ENCODE measurements at regions of chr22 and their contacts with region 1.

Region 1: GRCh38 chr22:46798366-46799350 is 36.2 kb downstream of the TBC1D22A start:
- DNase-seq: peak; percentile 55 to 83 (median 71)
- ATAC-seq: peak; percentile 87
- H3K4me3 ChIP-seq: no peak overlapping the region
- H3K4me3 Mint-ChIP-seq: no peak overlapping the region
- H3K27ac ChIP-seq: no peak overlapping the region
- H3K27ac Mint-ChIP-seq: peak overlapping the region; percentile 87
- H3K4me1 ChIP-seq: peaks cover 7% of the 10 kb centered on the region
- H3K4me1 Mint-ChIP-seq: peaks cover 26% of the 10 kb centered on the region
- H3K27me3 ChIP-seq: no peaks in the 10 kb centered on the region
- H3K27me3 Mint-ChIP-seq: no peaks in the 10 kb centered on the region
- CTCF ChIP-seq: peak; percentile 72

Region 2: GRCh38 chr22:46563381-46564083 is 235.1 kb before region 1 on chr22:
- CTCF ChIA-PET with region 1: interaction called, 39 read pairs
- POLR2A ChIA-PET with region 1: no interaction called
- intact Hi-C with region 1: loop called in 1 of 2 experiments (anchors 1 kb)
- DNase-seq: peak; percentile 63 to 86 (median 76)
- ATAC-seq: peak; percentile 95
- H3K4me3 ChIP-seq: no peak overlapping the region
- H3K4me3 Mint-ChIP-seq: no peak overlapping the region
- H3K27ac ChIP-seq: no peak overlapping the region
- H3K27ac Mint-ChIP-seq: no peak overlapping the region
- H3K4me1 ChIP-seq: peaks cover 5% of the 10 kb centered on the region
- H3K4me1 Mint-ChIP-seq: peaks cover 2% of the 10 kb centered on the region
- H3K27me3 ChIP-seq: no peaks in the 10 kb centered on the region
- H3K27me3 Mint-ChIP-seq: no peaks in the 10 kb centered on the region
- CTCF ChIP-seq: peak; percentile 68

Region 3: DNA sequence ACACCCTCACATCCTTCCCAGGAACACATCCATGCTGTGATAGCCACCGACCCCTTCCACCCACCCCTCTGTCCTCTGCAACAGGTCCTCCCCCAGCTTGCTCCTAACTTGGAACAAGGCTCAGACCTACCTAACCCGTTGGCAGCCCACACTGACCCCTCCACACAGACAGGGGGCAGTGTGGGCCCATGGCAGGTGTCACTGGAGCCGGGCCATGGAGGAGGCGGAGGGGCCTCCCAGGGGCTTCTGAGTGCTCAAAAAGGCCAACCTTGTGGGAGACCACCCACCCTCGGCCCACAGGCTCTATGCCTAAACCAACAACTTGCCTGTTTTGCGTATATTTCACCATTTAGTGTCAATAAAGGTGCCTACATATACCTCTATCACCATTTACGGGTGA is 117.6 kb before region 1 on chr22:
- CTCF ChIA-PET with region 1: interaction called, 12 read pairs
- POLR2A ChIA-PET with region 1: no interaction called
- intact Hi-C with region 1: no loop called
- DNase-seq: peak in 3 of 9 experiments; percentile 21 to 44 (median 43)
- ATAC-seq: peak; percentile 54
- H3K4me3 ChIP-seq: no peak overlapping the region
- H3K4me3 Mint-ChIP-seq: no peak overlapping the region
- H3K27ac ChIP-seq: no peak overlapping the region
- H3K27ac Mint-ChIP-seq: peak overlapping the region; percentile 27
- H3K4me1 ChIP-seq: peaks cover 18% of the 10 kb centered on the region
- H3K4me1 Mint-ChIP-seq: peaks cover 23% of the 10 kb centered on the region
- H3K27me3 ChIP-seq: no peaks in the 10 kb centered on the region
- H3K27me3 Mint-ChIP-seq: no peaks in the 10 kb centered on the region
- CTCF ChIP-seq: peak; percentile 24

Region 4: GRCh38 chr22:46737976-46738646 is 60.5 kb before region 1 on chr22 and contains the start of gene CERK:
- CTCF ChIA-PET with region 1: interaction called, 35 read pairs
- POLR2A ChIA-PET with region 1: interaction called, 3 read pairs
- intact Hi-C with region 1: loop called in 1 of 2 experiments (anchors 1 kb)
- DNase-seq: peak; percentile 39 to 84 (median 70)
- ATAC-seq: peak; percentile 71
- H3K4me3 ChIP-seq: peak within 1 kb of the TSS; percentile 59 to 70
- H3K4me3 Mint-ChIP-seq: peak within 1 kb of the TSS; percentile 99
- H3K27ac ChIP-seq: peak within 1 kb of the TSS; percentile 59 to 81
- H3K27ac Mint-ChIP-seq: peak within 1 kb of the TSS; percentile 99
- H3K4me1 ChIP-seq: peaks cover 49% of the 10 kb centered on the region
- H3K4me1 Mint-ChIP-seq: peaks cover 44% of the 10 kb centered on the region
- H3K27me3 ChIP-seq: no peaks in the 10 kb centered on the region
- H3K27me3 Mint-ChIP-seq: no peaks in the 10 kb centered on the region
- CTCF ChIP-seq: no peak
- total RNA-seq, gene CERK: 93.5 to 95.0 TPM

Region 5: DNA sequence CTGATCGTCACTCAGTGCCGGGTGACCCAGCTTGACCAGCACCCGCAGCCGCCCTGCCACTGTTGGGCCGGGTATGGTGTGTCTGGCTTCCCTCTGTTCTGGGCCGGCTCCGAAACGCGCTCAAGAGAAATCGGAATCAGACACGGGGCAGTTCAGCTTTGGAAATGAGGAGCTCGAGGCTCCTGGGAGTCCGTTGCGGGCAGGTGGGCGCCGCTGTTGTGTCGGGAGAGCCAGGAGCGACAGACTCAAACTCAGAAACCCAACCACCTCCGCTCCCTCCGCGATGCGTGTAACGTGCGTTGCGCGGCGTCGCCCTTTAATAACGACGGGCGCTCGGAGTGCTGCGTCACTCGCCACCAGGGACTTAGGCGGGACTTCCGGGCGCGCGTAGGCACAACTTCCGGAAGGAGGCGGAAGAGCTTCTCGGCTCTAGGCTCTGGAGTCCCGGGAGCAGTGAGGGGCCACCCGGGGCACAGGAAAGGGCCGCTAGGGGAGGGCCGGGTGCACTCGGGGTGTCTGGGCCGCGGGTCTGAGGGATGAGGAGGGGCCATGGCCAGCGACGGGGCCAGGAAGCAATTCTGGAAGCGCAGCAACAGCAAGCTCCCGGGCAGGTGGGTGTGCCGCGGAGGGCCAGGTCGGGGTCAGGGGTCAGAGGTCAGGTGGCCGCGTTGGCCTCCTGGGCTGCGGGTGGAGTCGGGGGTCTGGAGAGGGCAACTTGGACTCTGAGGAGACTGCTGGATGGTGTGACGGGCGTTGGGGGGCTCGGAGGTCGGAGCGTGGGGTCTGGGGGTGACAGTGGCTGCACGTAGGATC is 36.2 kb before region 1 on chr22 and contains the start of gene TBC1D22A:
- CTCF ChIA-PET with region 1: interaction called, 188 read pairs
- POLR2A ChIA-PET with region 1: interaction called, 49 read pairs
- intact Hi-C with region 1: loop called (anchors 1 kb)
- DNase-seq: peak; percentile 91 to 97 (median 95)
- ATAC-seq: peak; percentile 86
- H3K4me3 ChIP-seq: peak within 1 kb of the TSS; percentile 84 to 99
- H3K4me3 Mint-ChIP-seq: peak within 1 kb of the TSS; percentile 99
- H3K27ac ChIP-seq: peak within 1 kb of the TSS; percentile 95 to 99
- H3K27ac Mint-ChIP-seq: peak within 1 kb of the TSS; percentile 100
- H3K4me1 ChIP-seq: peaks cover 36% of the 10 kb centered on the region
- H3K4me1 Mint-ChIP-seq: peaks cover 64% of the 10 kb centered on the region
- H3K27me3 ChIP-seq: no peaks in the 10 kb centered on the region
- H3K27me3 Mint-ChIP-seq: no peaks in the 10 kb centered on the region
- CTCF ChIP-seq: no peak
- total RNA-seq, gene TBC1D22A: 21.8 to 27.4 TPM

Region 6: GRCh38 chr22:46783721-46784120 is 14.9 kb before region 1 on chr22:
- CTCF ChIA-PET with region 1: interaction called, 36 read pairs
- POLR2A ChIA-PET with region 1: no interaction called
- intact Hi-C with region 1: no loop called
- DNase-seq: no peak
- ATAC-seq: no peak
- H3K4me3 ChIP-seq: no peak overlapping the region
- H3K4me3 Mint-ChIP-seq: no peak overlapping the region
- H3K27ac ChIP-seq: no peak overlapping the region
- H3K27ac Mint-ChIP-seq: no peak overlapping the region
- H3K4me1 ChIP-seq: peaks cover 4% of the 10 kb centered on the region
- H3K4me1 Mint-ChIP-seq: peaks cover 38% of the 10 kb centered on the region
- H3K27me3 ChIP-seq: no peaks in the 10 kb centered on the region
- H3K27me3 Mint-ChIP-seq: no peaks in the 10 kb centered on the region
- CTCF ChIP-seq: no peak